H1 (cell line): ENCODE measurements at regions of chr3 and their contacts with region 1.

Region 1: DNA sequence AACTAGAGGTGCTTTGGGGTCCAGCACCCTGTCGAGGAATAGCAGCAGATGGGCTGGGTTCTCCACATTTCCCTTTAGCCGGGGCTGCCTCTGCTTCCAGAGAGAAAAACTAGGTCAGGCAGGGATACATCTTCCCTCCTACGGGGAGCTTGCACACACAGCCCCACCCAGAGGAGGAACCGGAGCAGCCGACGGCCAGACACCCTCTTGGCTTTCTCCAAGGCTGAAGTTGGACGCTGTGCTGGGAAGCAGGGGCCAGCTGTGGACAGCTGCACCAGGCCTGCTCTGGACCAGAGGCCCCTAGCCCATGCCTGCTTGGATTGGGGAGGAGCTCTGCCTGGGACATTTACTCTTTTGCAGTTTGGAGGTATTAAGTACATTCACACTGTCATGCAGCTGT is 44.7 kb upstream of the NR2C2 start:
- DNase-seq: no peak
- H3K4me3 ChIP-seq: no peak overlapping the region
- H3K27ac ChIP-seq: no peak overlapping the region
- H3K4me1 ChIP-seq: peaks cover 3 to 26% (median 19%) of the 10 kb centered on the region in 4 experiments
- H3K27me3 ChIP-seq: no peaks in the 10 kb centered on the region
- CTCF ChIP-seq: no peak
- EP300 ChIP-seq: no peak
- POLR2A ChIP-seq: no peak
- RAD21 ChIP-seq: no peak

Region 2: GRCh38 chr3:14857506-14857905 is 45.2 kb before region 1 on chr3:
- CTCF ChIA-PET with region 1: interaction called, 14 read pairs
- POLR2A ChIA-PET with region 1: no interaction called
- DNase-seq: no peak
- H3K4me3 ChIP-seq: no peak overlapping the region
- H3K27ac ChIP-seq: no peak overlapping the region
- H3K4me1 ChIP-seq: peaks cover 3 to 8% (median 5%) of the 10 kb centered on the region in 4 experiments
- H3K27me3 ChIP-seq: no peaks in the 10 kb centered on the region; a peak in 1 of 7 replicates
- CTCF ChIP-seq: peak in 2 of 3 experiments; percentile 55 to 59; a peak in 3 of 4 replicates
- EP300 ChIP-seq: no peak
- POLR2A ChIP-seq: no peak
- RAD21 ChIP-seq: peak; percentile 78 to 82

Region 3: GRCh38 chr3:14876921-14877360 is 25.8 kb before region 1 on chr3:
- CTCF ChIA-PET with region 1: interaction called, 10 read pairs
- POLR2A ChIA-PET with region 1: interaction called, 4 read pairs
- DNase-seq: no peak
- H3K4me3 ChIP-seq: no peak overlapping the region
- H3K27ac ChIP-seq: no peak overlapping the region
- H3K4me1 ChIP-seq: peaks cover 0 to 21% (median 12%) of the 10 kb centered on the region in 4 experiments; a peak in 6 of 7 replicates
- H3K27me3 ChIP-seq: no peaks in the 10 kb centered on the region
- CTCF ChIP-seq: no peak
- EP300 ChIP-seq: no peak
- POLR2A ChIP-seq: no peak
- RAD21 ChIP-seq: no peak

Region 4: DNA sequence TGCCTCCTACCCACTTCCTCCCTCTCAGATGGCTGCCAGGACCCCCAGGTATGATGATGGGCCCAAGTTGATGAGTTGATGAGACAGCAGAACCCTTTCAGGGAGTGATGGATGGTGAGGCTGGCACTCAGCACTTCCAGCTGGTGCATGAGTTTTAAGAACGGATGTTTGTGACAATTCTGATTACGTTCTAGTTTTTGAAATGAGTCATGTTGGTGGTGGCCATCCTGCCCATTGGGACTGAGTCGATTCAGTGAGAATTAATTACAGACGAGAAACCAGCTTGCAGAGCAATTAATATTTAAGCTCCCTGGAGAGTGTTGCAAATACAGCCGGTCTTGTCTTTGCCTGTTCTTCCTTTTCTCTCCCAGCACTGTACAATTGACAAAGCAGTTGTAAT is 12.2 kb before region 1 on chr3:
- CTCF ChIA-PET with region 1: interaction called, 337 read pairs
- POLR2A ChIA-PET with region 1: interaction called, 5 read pairs
- DNase-seq: no peak
- H3K4me3 ChIP-seq: no peak overlapping the region
- H3K27ac ChIP-seq: no peak overlapping the region
- H3K4me1 ChIP-seq: no peaks in the 10 kb centered on the region
- H3K27me3 ChIP-seq: no peaks in the 10 kb centered on the region
- CTCF ChIP-seq: no peak
- EP300 ChIP-seq: no peak
- POLR2A ChIP-seq: no peak
- RAD21 ChIP-seq: no peak

Region 5: GRCh38 chr3:14980689-14981088 is 78.0 kb after region 1 on chr3:
- CTCF ChIA-PET with region 1: no interaction called
- POLR2A ChIA-PET with region 1: no interaction called
- DNase-seq: no peak
- H3K4me3 ChIP-seq: no peak overlapping the region
- H3K27ac ChIP-seq: no peak overlapping the region
- H3K4me1 ChIP-seq: no peaks in the 10 kb centered on the region
- H3K27me3 ChIP-seq: no peaks in the 10 kb centered on the region
- CTCF ChIP-seq: no peak
- EP300 ChIP-seq: no peak
- POLR2A ChIP-seq: no peak
- RAD21 ChIP-seq: no peak